ENCODE measurements at regions of chr17 and their contacts with region 1.

Region 1: DNA sequence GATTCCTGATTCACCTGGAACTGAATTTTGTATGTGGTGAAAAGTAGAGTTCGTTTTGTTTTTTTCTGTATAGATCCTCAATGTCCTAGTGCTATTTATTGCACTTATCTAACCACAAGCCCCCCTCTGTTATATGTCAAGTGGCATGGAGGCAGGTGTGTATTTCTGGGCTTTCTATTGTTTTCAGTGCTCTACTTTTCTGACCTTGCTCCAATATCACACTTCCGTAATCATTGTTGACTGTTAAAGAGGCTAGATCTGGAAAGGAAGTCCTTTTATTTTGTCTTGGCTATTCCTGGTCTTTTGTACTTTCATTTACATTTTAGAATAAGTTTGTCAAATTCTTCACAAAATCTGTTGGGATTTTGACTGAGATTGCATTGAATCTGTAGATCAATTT is 26.8 kb upstream of the FBXO47 start:
- DNase-seq: no peak
- ATAC-seq: no peak

Region 2: DNA sequence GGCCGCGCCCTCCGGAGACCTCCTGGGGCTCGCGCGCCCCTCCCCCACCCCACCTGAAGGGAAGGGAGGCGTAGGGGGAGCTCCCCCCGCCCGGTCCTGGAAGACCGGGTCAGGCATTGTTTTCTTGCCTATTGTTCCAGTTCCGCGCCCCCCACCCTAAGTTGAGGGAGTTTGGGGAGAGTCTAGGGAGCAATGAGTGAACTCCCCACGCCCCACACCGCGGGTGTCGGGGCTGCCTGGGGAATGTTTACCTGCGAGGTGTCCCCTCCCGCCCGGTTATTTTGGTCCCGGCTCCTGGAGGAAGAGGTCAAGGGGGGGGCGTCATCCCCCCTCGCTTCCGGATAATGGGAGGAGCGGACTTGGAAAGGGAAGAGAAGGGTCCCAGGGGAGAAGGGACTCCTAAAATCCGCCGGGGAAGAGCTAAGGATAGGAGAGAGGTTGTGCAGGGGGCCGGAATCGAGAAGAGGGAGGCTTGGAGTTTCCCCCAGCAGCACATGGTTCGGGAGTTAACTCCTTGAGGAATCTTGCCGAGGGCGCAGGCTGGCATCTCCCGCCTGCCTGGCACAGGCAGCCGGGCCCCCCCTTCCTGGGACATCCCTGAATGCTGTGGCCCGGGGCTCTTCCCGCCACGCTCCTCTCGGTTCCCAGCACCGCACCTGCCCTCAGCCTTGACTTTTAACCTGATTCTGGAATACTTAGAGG is 288.1 kb before region 1 on chr17:
- intact Hi-C with region 1: no loop called
- DNase-seq: peak; percentile 57 to 61
- ATAC-seq: no peak

Region 3: DNA sequence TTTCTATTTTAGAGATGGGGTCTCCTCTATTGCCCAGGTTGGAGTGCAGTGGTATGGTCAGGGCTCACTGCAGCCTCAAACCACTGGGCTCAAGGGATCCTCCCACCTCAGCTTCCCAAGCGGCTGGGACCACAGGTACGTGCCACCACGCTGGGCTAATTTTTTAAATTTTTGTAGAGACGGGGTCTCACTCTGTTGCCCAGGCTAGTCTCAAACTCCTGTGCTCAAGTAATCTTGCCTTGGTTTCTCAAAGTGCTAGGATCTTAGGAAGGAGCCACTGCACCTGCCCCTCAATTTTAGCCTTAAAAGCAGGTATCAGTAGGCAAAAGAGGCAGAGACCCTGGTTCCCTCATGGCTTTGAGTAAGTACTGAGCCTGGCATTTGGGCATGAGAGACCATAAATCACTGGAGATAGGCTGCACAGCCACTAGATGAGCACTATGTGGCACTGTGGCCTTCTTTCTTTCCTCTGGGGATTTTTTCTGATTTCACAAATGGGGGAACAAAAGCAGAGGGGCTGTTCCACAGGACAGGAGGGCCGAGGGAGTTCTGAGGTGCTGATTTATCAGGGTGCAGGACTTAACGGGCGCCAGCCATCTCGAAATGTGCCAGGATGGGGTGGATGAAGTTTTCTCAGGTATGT is 75.2 kb after region 1 on chr17:
- intact Hi-C with region 1: loop called in 1 of 2 experiments (anchors 10 kb)
- DNase-seq: no peak
- ATAC-seq: peak; percentile 61

Measured in left colon (tissue), 2 donors.